ENCODE measurements at regions of chr20 and their contacts with region 1.

Region 1: GRCh38 chr20:63495741-63496595 is 2.9 kb downstream of the EEF1A2 start:
- DNase-seq: peak; percentile 85
- ATAC-seq: peak; percentile 37

Region 2: GRCh38 chr20:63457737-63458136 is 38.2 kb before region 1 on chr20:
- intact Hi-C with region 1: no loop called
- DNase-seq: no peak
- ATAC-seq: peak; percentile 56

Region 3: DNA sequence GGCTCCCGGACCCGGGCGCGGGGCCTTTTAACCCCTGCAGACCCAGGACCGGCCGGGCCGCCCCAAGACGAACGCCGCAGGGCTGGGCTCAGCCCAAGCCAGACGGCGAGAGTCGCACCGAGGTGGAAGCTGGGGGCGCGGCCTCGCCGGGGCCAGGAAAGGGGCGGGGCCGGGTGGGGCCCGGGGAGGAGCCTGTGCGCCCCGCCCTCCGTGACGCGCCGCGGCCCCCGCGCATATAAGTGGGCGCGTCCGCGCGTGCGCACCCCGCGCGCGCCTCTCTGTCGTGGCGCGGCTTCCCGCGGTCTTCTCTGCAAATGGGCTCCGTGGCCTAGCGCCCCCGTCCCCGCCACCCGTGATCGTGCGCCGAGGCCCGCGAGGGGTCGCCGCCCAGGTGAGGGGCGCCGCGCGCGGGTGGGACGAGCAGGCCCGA is 24.6 kb after region 1 on chr20 and contains the start of gene PPDPF:
- intact Hi-C with region 1: loop called (anchors 1 kb)
- DNase-seq: peak; percentile 95
- ATAC-seq: peak; percentile 93
- total RNA-seq, gene PPDPF: 261 TPM

Measured in Right ventricle myocardium inferior (tissue), 1 donor.